PC-3 (cell line): ENCODE measurements at regions of chr11 and their contacts with region 1.

Region 1: DNA sequence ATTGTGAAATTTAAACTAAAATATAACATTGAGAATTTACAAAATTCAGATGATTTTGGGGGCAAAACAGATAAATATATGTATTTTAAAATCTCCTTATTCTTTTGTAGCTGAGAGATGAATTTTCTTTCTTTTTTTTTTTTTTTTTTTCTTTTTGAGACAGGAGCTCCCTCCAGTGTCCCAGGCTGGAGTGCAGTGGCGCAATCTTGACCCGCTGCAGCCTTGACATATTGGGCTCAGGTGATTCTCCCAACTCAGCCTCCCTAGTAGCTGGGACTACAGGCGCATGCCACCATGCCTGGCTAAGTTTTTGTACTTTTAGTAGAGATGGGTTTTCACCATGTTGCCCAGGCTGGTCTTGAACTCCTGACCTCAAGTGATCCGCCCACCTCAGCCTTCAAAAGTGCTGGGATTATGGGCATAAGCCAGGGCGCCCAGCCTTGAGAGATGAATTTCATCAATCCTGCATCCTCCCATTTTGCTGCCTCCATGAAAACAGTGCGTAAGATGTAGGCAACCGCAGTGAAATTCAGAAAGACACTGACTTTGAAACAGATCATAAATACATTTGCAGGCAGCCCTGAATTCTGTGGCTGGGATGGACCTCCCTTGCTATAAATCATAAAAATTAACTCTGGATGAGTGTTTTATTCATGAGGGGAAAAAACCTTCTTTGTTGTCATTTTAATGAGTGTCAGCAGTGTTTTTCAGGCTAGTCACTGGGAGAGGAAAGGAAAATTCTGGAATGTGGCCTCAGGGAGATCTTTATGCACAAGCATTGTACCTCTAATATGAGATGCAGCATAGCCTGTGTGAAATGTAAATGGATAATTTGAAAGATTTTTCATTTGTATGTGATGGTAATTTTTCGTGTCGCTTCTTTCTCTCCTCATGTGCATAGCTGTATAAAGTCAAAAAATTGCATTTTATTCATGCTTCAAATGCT is 14.4 kb downstream of the ELMOD1 start:
- DNase-seq: peak; percentile 39
- ATAC-seq: peak; percentile 35; the same call in 1 of the 2 replicates
- H3K4me3 ChIP-seq: no peak overlapping the region
- H3K27ac ChIP-seq: no peak overlapping the region
- H3K4me1 ChIP-seq: no peaks in the 10 kb centered on the region
- H3K27me3 ChIP-seq: peaks cover 88% of the 10 kb centered on the region
- CTCF ChIP-seq: peak; percentile 55; the same call in 1 of the 2 replicates

Region 2: GRCh38 chr11:107397357-107397756 is 208.0 kb before region 1 on chr11:
- CTCF ChIA-PET with region 1: no interaction called
- POLR2A ChIA-PET with region 1: no interaction called
- intact Hi-C with region 1: no loop called
- DNase-seq: peak; percentile 41
- ATAC-seq: no peak; the same call in 1 of the 2 replicates
- H3K4me3 ChIP-seq: no peak overlapping the region
- H3K27ac ChIP-seq: peak overlapping the region; percentile 32
- H3K4me1 ChIP-seq: peaks cover 9% of the 10 kb centered on the region
- H3K27me3 ChIP-seq: no peaks in the 10 kb centered on the region
- CTCF ChIP-seq: no peak

Region 3: DNA sequence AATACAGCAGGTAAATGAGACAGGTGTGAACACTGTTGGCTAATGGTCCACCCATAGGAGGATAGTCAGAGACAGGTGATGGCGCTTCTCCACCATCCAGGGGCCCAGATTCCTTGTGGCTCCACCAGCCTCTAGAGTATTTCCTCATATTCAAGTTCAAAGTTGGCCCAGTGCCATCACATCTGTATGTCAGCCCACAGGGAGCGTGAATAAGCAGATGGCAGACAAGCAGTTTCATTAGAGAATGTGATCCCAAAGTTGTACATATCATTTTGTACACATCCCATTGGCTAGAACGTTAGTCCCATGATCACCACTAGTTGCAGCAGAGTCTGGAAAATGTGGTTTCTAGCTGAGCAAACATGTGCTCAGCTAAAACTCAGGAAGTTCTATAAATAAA is 136.7 kb before region 1 on chr11:
- CTCF ChIA-PET with region 1: no interaction called
- POLR2A ChIA-PET with region 1: no interaction called
- intact Hi-C with region 1: no loop called
- DNase-seq: no peak
- ATAC-seq: peak; percentile 31
- H3K4me3 ChIP-seq: no peak overlapping the region
- H3K27ac ChIP-seq: no peak overlapping the region
- H3K4me1 ChIP-seq: no peaks in the 10 kb centered on the region
- H3K27me3 ChIP-seq: peaks cover 30% of the 10 kb centered on the region
- CTCF ChIP-seq: no peak

Region 4: GRCh38 chr11:107665018-107665417 is 59.7 kb after region 1 on chr11:
- CTCF ChIA-PET with region 1: interaction called, 10 read pairs
- POLR2A ChIA-PET with region 1: no interaction called
- intact Hi-C with region 1: no loop called
- DNase-seq: no peak
- ATAC-seq: no peak
- H3K4me3 ChIP-seq: no peak overlapping the region
- H3K27ac ChIP-seq: no peak overlapping the region
- H3K4me1 ChIP-seq: no peaks in the 10 kb centered on the region
- H3K27me3 ChIP-seq: peaks cover 90% of the 10 kb centered on the region
- CTCF ChIP-seq: no peak